Posterior cingulate gyrus (tissue), 11 donors: ENCODE measurements at regions of chr19 and their contacts with region 1.

Region 1: DNA sequence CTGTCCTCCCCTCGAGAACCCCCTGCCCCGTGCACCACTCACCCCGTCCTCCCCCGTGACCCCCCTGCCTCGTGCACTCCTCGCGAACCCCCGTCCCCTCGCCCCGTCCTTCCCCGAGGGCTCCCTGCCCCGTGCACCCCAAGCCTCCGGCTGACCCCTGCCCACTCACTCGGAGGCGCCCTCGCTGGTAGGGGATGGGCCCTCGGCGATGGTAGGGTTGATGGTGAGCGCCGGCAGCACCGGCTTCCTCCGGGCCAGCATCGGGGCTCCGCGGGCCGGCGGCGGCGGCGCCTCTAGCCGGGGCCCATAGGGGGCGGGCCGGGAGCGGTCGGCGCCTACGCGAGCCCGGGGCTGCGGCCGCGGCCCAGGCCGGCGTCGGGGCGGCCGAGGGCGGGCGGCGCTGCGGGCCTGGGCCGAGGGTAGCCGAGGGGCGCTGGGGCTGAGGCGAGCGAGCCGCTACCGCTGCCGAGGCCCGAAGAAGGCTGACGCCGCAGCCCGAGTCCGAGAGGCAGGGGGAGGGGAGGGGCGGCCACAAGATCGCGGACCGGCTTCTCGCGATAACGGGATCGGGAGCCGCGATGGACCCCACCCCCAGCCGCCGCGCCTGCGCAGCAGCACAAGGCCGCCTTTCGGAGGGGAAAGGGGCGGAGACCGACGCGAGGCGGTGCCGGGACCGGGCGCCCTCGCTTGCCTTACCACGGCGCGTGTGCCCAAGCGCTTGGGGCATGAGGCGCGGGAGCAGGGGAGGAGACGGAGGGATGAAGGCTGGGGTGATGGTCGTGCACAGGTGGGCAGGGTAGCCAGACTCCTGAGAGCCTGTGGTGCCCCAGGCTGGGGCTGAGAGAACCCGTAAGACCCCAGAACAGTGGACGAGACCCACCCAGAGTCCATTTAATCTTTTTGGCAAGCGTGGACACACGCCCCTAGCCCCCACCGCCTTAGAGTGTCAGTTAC is at the start of gene MAP2K2:
- DNase-seq: peak; percentile 93 to 99 (median 96)

Region 2: DNA sequence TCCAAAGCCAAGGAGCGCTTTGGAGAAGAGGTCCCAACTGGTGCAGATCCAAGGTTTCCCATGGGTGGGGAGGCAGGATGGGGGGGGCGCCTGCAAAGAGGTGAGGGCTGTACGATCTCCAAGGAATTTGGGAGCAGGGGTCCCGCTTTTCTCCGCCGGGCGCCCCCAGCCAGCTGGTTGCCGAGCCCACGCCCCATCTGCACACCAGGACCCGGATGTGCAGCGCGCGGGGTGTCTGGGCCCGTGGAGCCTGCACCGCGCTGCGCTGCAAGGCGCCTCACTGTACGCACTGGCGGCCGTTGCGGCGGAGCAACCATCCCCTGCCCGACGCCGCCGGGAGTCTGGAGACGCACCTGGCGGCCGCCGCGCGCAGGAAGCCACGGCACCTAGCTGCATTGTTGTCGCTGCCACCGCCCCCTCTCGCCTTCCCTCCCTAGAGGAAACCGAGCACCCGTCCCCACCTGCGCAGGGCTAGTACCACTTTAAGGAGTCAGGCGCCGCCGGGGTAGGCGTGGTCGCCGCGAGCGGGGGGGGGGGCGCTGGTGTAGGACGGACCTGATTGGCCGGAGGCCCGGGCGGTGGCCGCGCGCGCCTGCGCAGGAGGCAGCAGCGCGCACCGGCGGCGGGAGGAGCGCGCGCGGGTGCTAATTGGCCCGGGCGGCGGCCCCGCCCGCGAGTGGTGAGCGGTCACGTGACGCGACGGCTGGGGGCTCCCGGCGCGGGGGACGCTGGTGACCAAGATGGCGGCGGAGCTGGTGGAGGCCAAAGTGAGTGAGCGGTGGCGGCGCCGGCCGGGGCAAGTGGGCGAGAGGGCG is 116.7 kb before region 1 on chr19 and contains the start of gene PIAS4:
- intact Hi-C with region 1: loop called (anchors 5 kb)
- DNase-seq: peak; percentile 86 to 99 (median 93)

Region 3: DNA sequence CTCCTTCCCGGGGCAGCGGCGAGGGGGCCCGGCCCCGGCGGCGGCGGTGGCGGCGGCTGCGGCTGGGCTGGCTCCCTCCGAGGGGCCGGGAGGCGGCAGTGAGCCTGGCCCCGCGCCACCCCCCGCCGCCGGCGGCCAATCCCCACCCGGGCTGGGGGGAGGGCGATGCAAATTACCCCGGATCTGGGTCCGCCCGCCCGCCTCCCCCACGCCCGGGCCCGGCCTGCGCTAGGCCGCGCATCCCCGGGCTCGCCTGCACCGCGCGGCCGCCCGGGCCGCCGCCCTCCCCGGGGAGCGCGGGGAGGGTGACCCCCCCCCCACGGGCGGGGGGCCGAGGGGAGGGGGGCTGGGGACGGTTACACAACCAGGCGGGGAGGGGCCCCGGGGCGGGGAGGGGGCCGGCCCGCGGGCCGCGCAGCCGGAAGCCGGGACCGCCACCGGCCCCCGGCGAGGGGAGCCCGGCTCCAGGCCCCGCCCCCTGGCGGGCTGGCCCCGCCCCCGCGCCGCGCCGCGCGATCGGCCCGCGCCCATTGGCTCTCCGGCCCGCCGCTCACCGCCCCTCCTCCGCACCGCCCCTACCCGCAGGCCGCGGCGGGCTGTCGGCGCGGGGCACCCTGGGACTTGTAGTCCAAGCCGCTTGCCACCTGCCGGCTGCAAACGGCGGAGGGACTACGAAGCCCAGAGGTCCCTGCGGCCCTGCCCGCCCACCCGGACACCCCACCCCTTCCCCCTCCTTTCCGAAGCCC is 58.3 kb before region 1 on chr19:
- intact Hi-C with region 1: loop called (anchors 5 kb)
- DNase-seq: peak; percentile 91 to 100 (median 98)

Region 4: GRCh38 chr19:4182084-4182810 is 58.4 kb after region 1 on chr19 and contains the starts of genes ANKRD24 and SIRT6:
- intact Hi-C with region 1: loop called (anchors 10 kb)
- DNase-seq: peak; percentile 94 to 100 (median 96)